Activated CD8-positive, alpha-beta memory T cell treated with anti-CD3 and anti-CD28 coated beads, Interleukin-2, amount 10 ng/mL, durations not matched to agents 7 days and 5 days (primary cell): ENCODE measurements at regions of chr16 and their contacts with region 1.

Region 1: DNA sequence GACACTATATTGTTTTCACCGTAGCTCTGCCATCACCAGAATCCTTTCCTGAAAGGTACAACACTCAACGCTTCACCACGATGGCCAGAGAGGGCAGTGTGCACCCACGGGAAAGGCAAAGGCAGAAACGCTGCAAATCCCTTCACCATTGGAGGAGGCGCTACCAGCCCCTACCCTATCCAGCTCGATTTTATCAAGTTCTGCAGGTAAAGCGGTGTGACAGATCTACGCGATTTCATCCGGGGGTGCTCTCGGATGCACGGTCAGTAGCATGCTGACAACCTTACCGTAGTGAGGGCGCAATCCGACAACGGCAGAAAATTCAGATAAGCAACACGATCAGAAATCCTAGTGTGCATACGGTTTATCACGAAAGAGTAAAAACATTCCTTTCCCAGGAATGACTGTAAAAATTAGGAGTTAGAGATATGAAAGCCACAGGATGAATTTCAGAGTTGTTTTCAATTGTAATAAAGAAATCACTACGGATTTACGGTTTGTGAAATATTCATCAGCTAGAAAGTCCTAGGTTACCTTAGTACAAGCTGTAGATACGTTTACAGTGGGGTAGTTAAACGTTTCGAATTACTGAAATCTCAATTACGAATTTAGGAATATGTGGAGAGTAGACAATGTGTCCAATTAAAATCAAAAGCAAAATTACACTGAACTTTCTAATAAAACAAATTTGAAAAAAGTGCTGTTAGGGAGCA is 1.8 kb downstream of the NETO2 start:
- DNase-seq: peak; percentile 92
- ATAC-seq: peak; percentile 69
- H3K4me3 Mint-ChIP-seq: peak overlapping the region; percentile 77
- H3K27ac Mint-ChIP-seq: peak overlapping the region; percentile 49
- H3K4me1 Mint-ChIP-seq: peaks cover 41% of the 10 kb centered on the region
- H3K27me3 Mint-ChIP-seq: peaks cover 22% of the 10 kb centered on the region

Region 2: GRCh38 chr16:46973207-46973995 is 168.5 kb before region 1 on chr16 and contains the start of gene DNAJA2:
- CTCF ChIA-PET with region 1: interaction called, 14 read pairs
- DNase-seq: peak; percentile 93
- ATAC-seq: peak; percentile 93
- H3K4me3 Mint-ChIP-seq: peak within 1 kb of the TSS; percentile 91
- H3K27ac Mint-ChIP-seq: peak within 1 kb of the TSS; percentile 98
- H3K4me1 Mint-ChIP-seq: peaks cover 49% of the 10 kb centered on the region
- H3K27me3 Mint-ChIP-seq: no peaks in the 10 kb centered on the region
- total RNA-seq, gene DNAJA2: 55.6 to 70.2 TPM

Region 3: DNA sequence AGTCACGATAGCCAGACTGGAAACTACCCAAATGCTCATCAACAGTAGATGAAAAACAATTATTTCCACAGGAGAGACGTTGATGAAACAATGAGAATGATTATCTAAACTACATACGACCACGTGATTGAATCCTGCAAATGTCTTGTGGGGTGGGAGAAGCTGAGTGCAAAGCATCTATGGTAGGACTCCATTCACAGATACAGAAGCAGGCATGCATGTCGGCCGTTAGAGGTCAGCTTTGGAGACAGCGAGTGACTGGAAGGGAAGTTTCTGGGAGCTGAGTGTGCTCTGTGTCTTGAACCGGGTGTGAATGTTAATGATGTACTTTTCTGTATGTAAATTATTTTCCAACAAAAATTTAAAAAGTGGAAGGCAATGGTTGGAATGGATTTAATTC is 96.9 kb before region 1 on chr16:
- CTCF ChIA-PET with region 1: interaction called, 10 read pairs
- DNase-seq: no peak
- ATAC-seq: no peak
- H3K4me3 Mint-ChIP-seq: no peak overlapping the region
- H3K27ac Mint-ChIP-seq: no peak overlapping the region
- H3K4me1 Mint-ChIP-seq: peaks cover 15% of the 10 kb centered on the region
- H3K27me3 Mint-ChIP-seq: peaks cover 7% of the 10 kb centered on the region

Region 4: GRCh38 chr16:47175152-47175551 is 33.2 kb after region 1 on chr16:
- CTCF ChIA-PET with region 1: no interaction called
- DNase-seq: no peak
- ATAC-seq: no peak
- H3K4me3 Mint-ChIP-seq: no peak overlapping the region
- H3K27ac Mint-ChIP-seq: no peak overlapping the region
- H3K4me1 Mint-ChIP-seq: no peaks in the 10 kb centered on the region
- H3K27me3 Mint-ChIP-seq: no peaks in the 10 kb centered on the region

Region 5: GRCh38 chr16:48054881-48055601 is 913.1 kb after region 1 on chr16:
- CTCF ChIA-PET with region 1: interaction called, 12 read pairs
- DNase-seq: peak; percentile 56
- ATAC-seq: no peak
- H3K4me3 Mint-ChIP-seq: no peak overlapping the region
- H3K27ac Mint-ChIP-seq: no peak overlapping the region
- H3K4me1 Mint-ChIP-seq: peaks cover 2% of the 10 kb centered on the region
- H3K27me3 Mint-ChIP-seq: peaks cover 38% of the 10 kb centered on the region

Region 6: GRCh38 chr16:48164907-48165726 is 1023.2 kb after region 1 on chr16:
- CTCF ChIA-PET with region 1: interaction called, 38 read pairs
- DNase-seq: peak; percentile 74
- ATAC-seq: peak; percentile 88
- H3K4me3 Mint-ChIP-seq: no peak overlapping the region
- H3K27ac Mint-ChIP-seq: no peak overlapping the region
- H3K4me1 Mint-ChIP-seq: peaks cover 16% of the 10 kb centered on the region
- H3K27me3 Mint-ChIP-seq: peaks cover 19% of the 10 kb centered on the region